ENCODE measurements at regions of chr12 and their contacts with region 1.

Region 1: DNA sequence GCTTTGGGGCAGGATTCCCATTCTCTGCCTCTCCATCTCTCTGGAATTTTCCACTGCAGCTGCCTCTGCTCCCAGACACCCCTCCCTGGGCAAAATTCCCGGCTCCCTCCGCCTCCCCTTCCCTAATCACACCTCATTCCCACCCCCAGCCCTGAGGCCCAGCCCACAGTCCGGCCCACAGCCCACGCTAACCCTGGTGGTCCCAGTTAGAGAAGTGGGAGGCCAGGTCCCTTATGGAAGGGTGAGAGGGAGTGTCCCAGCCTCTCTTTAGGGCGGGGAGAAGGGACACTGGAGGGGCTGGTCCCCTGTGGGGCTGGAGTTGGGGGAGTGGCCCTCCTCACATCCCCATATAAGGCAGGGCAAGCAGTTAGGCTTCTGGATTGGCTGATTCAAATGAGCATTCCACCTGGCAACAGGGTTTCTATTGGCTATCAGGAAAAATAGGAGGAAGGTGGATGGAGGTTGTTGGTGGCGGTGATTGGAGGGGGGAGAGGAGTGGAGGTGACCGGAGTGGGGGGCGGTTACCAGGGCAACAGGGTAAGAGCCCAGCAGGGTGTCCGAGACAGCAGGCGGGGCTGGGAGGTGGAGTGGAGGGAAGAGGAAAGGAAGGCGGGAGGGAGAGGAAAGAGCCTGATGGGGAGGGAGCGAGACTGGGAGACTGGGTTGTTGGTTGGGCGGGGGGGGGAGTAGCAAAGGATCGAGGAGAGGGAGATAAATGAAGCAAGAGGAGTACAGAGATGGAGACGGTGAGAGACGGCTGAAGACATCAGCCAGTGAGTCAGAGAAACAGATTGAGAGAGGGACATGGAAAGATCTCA is 1.9 kb upstream of the PTMS start:
- DNase-seq: peak; percentile 94

Region 2: DNA sequence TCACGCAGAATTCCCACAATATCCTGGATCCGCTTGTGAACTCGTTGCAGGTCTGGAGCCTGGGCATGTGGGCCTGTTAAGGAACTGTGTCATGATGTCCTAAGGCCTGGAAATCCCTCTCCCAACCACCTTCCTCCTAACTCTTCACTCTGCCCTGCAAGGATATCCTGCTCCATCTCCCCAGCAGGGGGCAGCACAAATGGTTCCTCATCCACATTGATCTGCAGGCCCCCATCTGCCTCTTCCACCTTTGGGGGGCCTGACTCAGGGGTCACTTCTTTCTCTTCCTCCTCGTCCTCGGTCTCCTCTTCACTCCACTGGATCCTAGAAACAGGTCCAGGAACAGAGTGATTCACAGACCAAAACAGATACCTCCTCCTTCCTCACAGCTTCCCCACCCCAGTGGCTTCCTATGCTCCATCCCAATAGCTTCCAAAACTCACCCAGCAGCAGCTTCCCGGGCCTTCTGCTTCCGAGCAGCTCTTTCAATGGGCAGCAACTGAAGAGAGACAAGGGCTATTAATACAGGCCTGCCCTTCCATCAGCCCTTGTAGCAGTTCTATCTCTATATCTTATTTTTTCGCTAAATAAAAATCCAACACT is 200.7 kb before region 1 on chr12:
- CTCF ChIA-PET with region 1: no interaction called
- POLR2A ChIA-PET with region 1: no interaction called
- DNase-seq: peak; percentile 59

Region 3: GRCh38 chr12:6742834-6743233 is 21.4 kb before region 1 on chr12:
- CTCF ChIA-PET with region 1: no interaction called
- POLR2A ChIA-PET with region 1: no interaction called
- DNase-seq: no peak

Region 4: DNA sequence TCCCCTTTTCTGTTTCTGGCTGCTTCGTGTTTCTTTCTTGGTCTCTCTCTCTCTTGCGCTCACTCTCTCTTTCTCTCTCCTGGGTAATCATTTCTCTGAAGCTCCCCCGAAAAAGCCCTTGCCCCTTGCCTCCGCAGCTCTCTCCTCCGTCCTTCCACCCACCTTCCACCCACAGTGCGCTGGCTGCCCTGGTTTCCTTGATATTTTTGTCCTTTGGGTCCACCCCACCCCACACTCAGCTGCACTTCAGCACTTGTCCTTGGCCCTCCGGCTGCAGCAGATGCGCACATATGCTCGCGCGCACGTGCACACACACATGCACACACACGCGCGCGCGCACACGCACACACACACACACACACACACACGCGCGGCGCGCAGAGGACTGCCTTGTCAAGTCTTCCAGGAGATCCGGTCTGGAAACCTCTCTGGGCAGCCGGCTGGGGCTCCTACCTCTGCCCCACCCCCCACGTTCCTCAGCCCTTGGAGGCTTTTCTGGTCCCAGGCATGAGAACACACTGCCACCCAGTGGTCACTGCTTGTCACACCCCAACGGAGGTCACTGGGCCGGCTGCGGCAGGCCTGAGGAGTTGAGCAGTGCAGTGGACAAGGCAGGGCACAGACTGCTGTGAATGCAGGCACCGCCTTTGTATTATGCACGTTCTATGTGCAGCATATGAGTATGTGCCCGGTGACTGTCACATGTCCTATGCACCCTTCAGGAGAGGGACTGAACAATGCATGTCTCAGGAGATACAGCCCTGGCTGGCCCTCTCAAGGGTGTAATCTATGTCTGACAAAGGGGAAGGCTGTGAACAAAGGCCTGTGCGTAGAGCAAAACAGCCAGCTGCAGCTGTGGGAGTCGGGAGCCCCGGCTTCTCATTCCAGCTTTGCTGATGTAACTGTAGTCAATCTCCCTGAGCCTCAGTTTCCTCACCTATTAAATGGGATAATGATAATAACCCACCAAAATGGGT is 14.6 kb after region 1 on chr12:
- CTCF ChIA-PET with region 1: interaction called, 26 read pairs
- POLR2A ChIA-PET with region 1: interaction called, 25 read pairs
- DNase-seq: peak; percentile 87

Region 5: GRCh38 chr12:6858799-6859198 is 94.6 kb after region 1 on chr12:
- CTCF ChIA-PET with region 1: no interaction called
- POLR2A ChIA-PET with region 1: no interaction called
- DNase-seq: no peak

Measured in HEK293T (cell line).